Naive thymus-derived CD4-positive, alpha-beta T cell (primary cell): ENCODE measurements at regions of chrX and their contacts with region 1.

Region 1: DNA sequence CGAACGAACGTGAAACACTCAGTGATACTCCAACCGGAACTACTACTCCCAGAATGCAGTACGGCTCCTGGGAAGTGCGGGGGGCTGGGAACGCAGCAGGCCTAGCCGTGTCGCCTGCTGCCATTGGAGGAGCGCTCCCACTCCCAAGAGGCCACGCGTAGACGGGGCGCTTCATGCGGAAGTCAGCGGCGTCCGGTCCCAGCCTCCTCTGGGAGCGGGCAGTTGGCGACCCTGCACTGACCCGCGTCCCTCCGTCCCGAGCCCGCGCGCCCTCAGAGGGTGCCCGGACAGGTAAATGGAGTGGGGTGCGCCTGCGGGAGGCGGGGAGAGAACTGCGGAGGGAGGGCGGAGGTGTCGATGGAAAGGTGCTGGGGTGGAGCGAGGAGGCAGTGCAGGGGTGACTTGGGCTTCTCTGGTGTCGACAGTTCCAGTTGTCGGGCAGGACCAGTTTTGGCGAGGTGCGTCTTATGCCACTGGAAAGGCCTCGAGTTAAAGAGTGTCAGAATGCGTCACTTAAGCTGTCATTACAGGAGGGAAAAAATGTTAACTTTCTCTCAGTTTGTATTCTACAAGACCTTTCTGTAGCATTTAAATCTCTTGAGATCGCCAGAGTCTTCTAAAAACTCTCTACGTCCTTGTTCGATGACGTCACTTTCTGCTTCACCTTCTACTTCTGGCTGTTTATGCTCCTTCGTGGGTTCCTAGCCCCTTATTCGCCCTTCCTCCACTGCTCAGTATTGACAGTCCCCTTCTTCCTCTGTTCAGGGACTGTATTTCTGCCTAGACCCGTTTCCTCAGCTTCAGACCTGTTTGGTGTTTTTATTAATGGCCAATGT is at the start of gene VAMP7:
- DNase-seq: peak; percentile 47 to 82 (median 71)
- ATAC-seq: peak; percentile 99
- H3K4me3 ChIP-seq: peak within 1 kb of the TSS; percentile 55
- H3K4me3 Mint-ChIP-seq: peak within 1 kb of the TSS; percentile 86 to 97 (median 92)
- H3K27ac ChIP-seq: peak within 1 kb of the TSS; percentile 78
- H3K27ac Mint-ChIP-seq: peak within 1 kb of the TSS; percentile 63 to 98 (median 92)
- H3K4me1 ChIP-seq: peaks cover 0 to 5% of the 10 kb centered on the region in 2 donors
- H3K4me1 Mint-ChIP-seq: peaks cover 19 to 40% (median 34%) of the 10 kb centered on the region in 7 donors
- H3K27me3 ChIP-seq: no peaks in the 10 kb centered on the region
- H3K27me3 Mint-ChIP-seq: peaks cover 0 to 6% (median 4%) of the 10 kb centered on the region in 5 donors
- total RNA-seq, gene VAMP7: 18.5 to 32.5 (median 21.0) TPM

Region 2: GRCh38 chrX:155070975-155071693 is 810.2 kb before region 1 on chrX and contains the starts of genes BRCC3, CMC4 and MTCP1:
- CTCF ChIA-PET with region 1: no interaction called
- POLR2A ChIA-PET with region 1: no interaction called
- intact Hi-C with region 1: loop called in 1 of 2 experiments (anchors 1 kb)
- DNase-seq: peak; percentile 62 to 77 (median 74)
- ATAC-seq: peak; percentile 90
- H3K4me3 ChIP-seq: peak within 1 kb of the TSS; percentile 76
- H3K4me3 Mint-ChIP-seq: peak within 1 kb of the TSS; percentile 81 to 94 (median 89)
- H3K27ac ChIP-seq: peak within 1 kb of the TSS; percentile 82
- H3K27ac Mint-ChIP-seq: peak within 1 kb of the TSS; percentile 83 to 96 (median 94)
- H3K4me1 ChIP-seq: peaks cover 6 to 12% of the 10 kb centered on the region in 2 donors
- H3K4me1 Mint-ChIP-seq: peaks cover 30 to 62% (median 54%) of the 10 kb centered on the region in 7 donors
- H3K27me3 ChIP-seq: no peaks in the 10 kb centered on the region
- H3K27me3 Mint-ChIP-seq: no peaks in the 10 kb centered on the region
- total RNA-seq, gene BRCC3: 11.5 to 27.8 (median 15.2) TPM
- total RNA-seq, gene CMC4: 3.1 to 6.0 (median 5.1) TPM
- total RNA-seq, gene MTCP1: 10.3 to 21.5 (median 17.1) TPM

Region 3: GRCh38 chrX:155612312-155613224 is 268.8 kb before region 1 on chrX and contains the start of gene TMLHE:
- CTCF ChIA-PET with region 1: no interaction called
- POLR2A ChIA-PET with region 1: no interaction called
- intact Hi-C with region 1: loop called in 1 of 2 experiments (anchors 2 kb)
- DNase-seq: peak; percentile 28 to 68 (median 48)
- ATAC-seq: peak; percentile 93
- H3K4me3 ChIP-seq: peak within 1 kb of the TSS; percentile 83
- H3K4me3 Mint-ChIP-seq: peak within 1 kb of the TSS; percentile 87 to 95 (median 91)
- H3K27ac ChIP-seq: peak within 1 kb of the TSS; percentile 96
- H3K27ac Mint-ChIP-seq: peak within 1 kb of the TSS; percentile 91 to 97 (median 95)
- H3K4me1 ChIP-seq: no peaks in the 10 kb centered on the region
- H3K4me1 Mint-ChIP-seq: peaks cover 8 to 43% (median 33%) of the 10 kb centered on the region in 7 donors
- H3K27me3 ChIP-seq: no peaks in the 10 kb centered on the region
- H3K27me3 Mint-ChIP-seq: no peaks in the 10 kb centered on the region
- total RNA-seq, gene TMLHE: 11.8 to 17.7 (median 14.6) TPM

Region 4: GRCh38 chrX:155632386-155633100 is 248.8 kb before region 1 on chrX:
- CTCF ChIA-PET with region 1: no interaction called
- POLR2A ChIA-PET with region 1: no interaction called
- intact Hi-C with region 1: loop called in 1 of 2 experiments (anchors 2 kb)
- DNase-seq: peak in 7 of 9 donors; percentile 3 to 34 (median 18)
- ATAC-seq: peak; percentile 82
- H3K4me3 ChIP-seq: peak overlapping the region; percentile 12
- H3K4me3 Mint-ChIP-seq: peak overlapping the region; percentile 15 to 88 (median 80)
- H3K27ac ChIP-seq: peak overlapping the region; percentile 18
- H3K27ac Mint-ChIP-seq: peak overlapping the region; percentile 40 to 96 (median 87)
- H3K4me1 ChIP-seq: no peaks in the 10 kb centered on the region
- H3K4me1 Mint-ChIP-seq: peaks cover 0 to 12% (median 11%) of the 10 kb centered on the region in 7 donors
- H3K27me3 ChIP-seq: no peaks in the 10 kb centered on the region
- H3K27me3 Mint-ChIP-seq: no peaks in the 10 kb centered on the region

Region 5: DNA sequence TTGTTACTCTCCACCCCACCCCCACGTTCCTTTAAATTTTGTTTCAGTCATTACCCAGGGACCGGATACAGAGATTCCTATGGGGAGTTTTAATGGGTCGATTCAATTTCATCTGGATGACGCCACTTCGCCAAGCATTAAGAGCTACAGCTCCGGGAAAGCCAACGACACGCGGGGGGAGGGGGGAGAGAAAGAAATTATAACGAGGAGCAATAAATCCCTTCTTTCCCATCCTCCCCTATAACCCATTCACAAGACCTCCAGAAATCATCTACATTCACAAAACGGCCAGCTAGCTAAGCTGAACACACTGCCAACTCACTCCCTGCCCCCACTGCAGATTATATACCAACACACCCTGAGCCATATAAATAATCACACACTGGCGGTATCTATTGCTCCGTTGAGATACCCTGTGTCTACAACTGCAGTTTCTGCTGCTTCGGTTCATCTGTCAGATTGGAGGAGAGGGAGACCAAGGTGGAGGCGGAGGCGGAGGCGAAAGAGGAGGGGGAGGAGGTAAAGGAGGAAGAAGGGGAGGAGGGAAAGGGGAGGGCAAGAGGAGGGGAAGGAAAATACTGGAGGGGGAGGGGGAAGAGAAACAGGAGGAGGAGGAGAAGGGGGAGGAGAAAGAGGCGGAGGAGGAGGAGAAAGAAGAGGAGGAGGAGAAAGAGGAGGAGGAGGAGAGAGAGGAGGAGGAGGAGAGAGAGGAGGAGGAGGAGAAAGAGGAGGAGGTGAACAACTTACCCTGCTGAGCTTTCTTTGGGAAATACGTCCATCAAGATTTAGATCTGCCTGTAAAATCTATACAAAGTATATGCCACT is 114.1 kb before region 1 on chrX:
- CTCF ChIA-PET with region 1: no interaction called
- POLR2A ChIA-PET with region 1: no interaction called
- intact Hi-C with region 1: loop called in 1 of 2 experiments (anchors 5 kb)
- DNase-seq: peak in 8 of 9 donors; percentile 2 to 38 (median 22)
- ATAC-seq: peak; percentile 51
- H3K4me3 ChIP-seq: peak overlapping the region; percentile 16
- H3K4me3 Mint-ChIP-seq: peak overlapping the region; percentile 79 to 90 (median 86)
- H3K27ac ChIP-seq: peak overlapping the region; percentile 7
- H3K27ac Mint-ChIP-seq: peak overlapping the region in 7 of 9 donors; percentile 16 to 90 (median 45)
- H3K4me1 ChIP-seq: no peaks in the 10 kb centered on the region
- H3K4me1 Mint-ChIP-seq: peaks cover 0 to 12% (median 6%) of the 10 kb centered on the region in 7 donors
- H3K27me3 ChIP-seq: no peaks in the 10 kb centered on the region
- H3K27me3 Mint-ChIP-seq: no peaks in the 10 kb centered on the region

Region 6: GRCh38 chrX:155956649-155957048 is 75.3 kb after region 1 on chrX:
- CTCF ChIA-PET with region 1: no interaction called
- POLR2A ChIA-PET with region 1: no interaction called
- intact Hi-C with region 1: no loop called
- DNase-seq: no peak
- ATAC-seq: no peak
- H3K4me3 ChIP-seq: no peak overlapping the region
- H3K4me3 Mint-ChIP-seq: no peak overlapping the region
- H3K27ac ChIP-seq: no peak overlapping the region
- H3K27ac Mint-ChIP-seq: no peak overlapping the region
- H3K4me1 ChIP-seq: no peaks in the 10 kb centered on the region
- H3K4me1 Mint-ChIP-seq: no peaks in the 10 kb centered on the region
- H3K27me3 ChIP-seq: no peaks in the 10 kb centered on the region
- H3K27me3 Mint-ChIP-seq: peaks cover 0 to 4% (median 0%) of the 10 kb centered on the region in 5 donors